Activated CD4-positive, alpha-beta T cell treated with anti-CD3 and anti-CD28 coated beads for 36 hours (primary cell): ENCODE measurements at regions of chr20 and their contacts with region 1.

Region 1: GRCh38 chr20:63627129-63627750 is 339 bp upstream of the GMEB2 start:
- DNase-seq: peak; percentile 97
- ATAC-seq: peak; percentile 77
- H3K4me3 Mint-ChIP-seq: peak overlapping the region; percentile 87
- H3K27ac Mint-ChIP-seq: peak overlapping the region; percentile 97
- H3K4me1 Mint-ChIP-seq: peaks cover 39% of the 10 kb centered on the region
- H3K27me3 Mint-ChIP-seq: no peaks in the 10 kb centered on the region

Region 2: GRCh38 chr20:62926239-62927104 is 700.8 kb before region 1 on chr20 and contains the start of gene DIDO1:
- CTCF ChIA-PET with region 1: no interaction called
- POLR2A ChIA-PET with region 1: no interaction called
- intact Hi-C with region 1: loop called (anchors 5 to 10 kb)
- DNase-seq: peak; percentile 94
- ATAC-seq: peak; percentile 78
- H3K4me3 Mint-ChIP-seq: peak within 1 kb of the TSS; percentile 94
- H3K27ac Mint-ChIP-seq: peak within 1 kb of the TSS; percentile 96
- H3K4me1 Mint-ChIP-seq: peaks cover 64% of the 10 kb centered on the region
- H3K27me3 Mint-ChIP-seq: no peaks in the 10 kb centered on the region
- total RNA-seq, gene DIDO1: 43.7 to 49.7 TPM

Region 3: DNA sequence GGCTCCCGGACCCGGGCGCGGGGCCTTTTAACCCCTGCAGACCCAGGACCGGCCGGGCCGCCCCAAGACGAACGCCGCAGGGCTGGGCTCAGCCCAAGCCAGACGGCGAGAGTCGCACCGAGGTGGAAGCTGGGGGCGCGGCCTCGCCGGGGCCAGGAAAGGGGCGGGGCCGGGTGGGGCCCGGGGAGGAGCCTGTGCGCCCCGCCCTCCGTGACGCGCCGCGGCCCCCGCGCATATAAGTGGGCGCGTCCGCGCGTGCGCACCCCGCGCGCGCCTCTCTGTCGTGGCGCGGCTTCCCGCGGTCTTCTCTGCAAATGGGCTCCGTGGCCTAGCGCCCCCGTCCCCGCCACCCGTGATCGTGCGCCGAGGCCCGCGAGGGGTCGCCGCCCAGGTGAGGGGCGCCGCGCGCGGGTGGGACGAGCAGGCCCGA is 106.7 kb before region 1 on chr20 and contains the start of gene PPDPF:
- CTCF ChIA-PET with region 1: no interaction called
- POLR2A ChIA-PET with region 1: no interaction called
- intact Hi-C with region 1: loop called in 1 of 2 experiments (anchors 1 kb)
- DNase-seq: peak; percentile 93
- ATAC-seq: peak; percentile 80
- H3K4me3 Mint-ChIP-seq: peak within 1 kb of the TSS; percentile 77
- H3K27ac Mint-ChIP-seq: peak within 1 kb of the TSS; percentile 78
- H3K4me1 Mint-ChIP-seq: peaks cover 10% of the 10 kb centered on the region
- H3K27me3 Mint-ChIP-seq: no peaks in the 10 kb centered on the region
- total RNA-seq, gene PPDPF: 119 to 133 TPM

Region 4: DNA sequence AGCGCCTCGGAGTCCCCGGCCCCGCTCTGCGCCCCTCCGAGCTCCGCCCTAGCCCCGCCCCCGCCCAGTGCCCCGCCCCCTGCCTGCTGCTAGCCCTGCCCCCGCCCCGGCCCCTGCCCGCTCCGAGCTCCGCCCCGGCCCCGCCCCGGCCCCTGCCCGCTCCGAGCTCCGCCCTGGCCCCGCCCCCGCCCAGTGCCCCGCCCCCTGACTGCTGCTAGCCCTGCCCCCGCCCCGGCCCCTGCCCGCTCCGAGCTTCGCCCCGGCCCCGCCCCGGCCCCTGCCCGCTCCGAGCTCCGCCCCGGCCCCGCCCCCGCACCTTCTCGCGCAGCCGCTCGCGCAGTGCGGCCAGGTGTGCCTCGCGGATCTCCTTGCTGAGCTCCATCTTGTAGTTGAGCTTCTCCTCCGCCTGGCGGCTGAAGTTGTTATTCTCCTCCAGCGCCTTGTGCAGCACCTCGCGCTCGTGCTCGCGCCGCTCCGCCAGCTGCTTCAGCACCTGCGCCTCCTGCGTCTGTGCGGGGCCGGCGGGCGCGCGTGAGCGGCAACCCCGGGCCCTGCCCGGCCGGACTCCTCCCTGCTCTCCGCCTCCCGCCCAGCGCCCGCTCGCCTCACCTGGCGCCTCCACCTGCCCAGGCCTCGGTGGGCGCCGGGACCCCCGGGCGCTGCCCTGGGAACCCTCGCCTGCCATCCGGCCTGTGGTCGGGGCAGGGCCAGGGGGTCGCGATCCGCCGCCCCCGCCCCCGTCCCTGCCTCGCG is 14.7 kb after region 1 on chr20:
- CTCF ChIA-PET with region 1: interaction called, 5 read pairs
- POLR2A ChIA-PET with region 1: interaction called, 12 read pairs
- intact Hi-C with region 1: loop called in 1 of 2 experiments (anchors 1 kb)
- DNase-seq: peak; percentile 98
- ATAC-seq: peak; percentile 73
- H3K4me3 Mint-ChIP-seq: peak overlapping the region; percentile 65
- H3K27ac Mint-ChIP-seq: no peak overlapping the region
- H3K4me1 Mint-ChIP-seq: peaks cover 31% of the 10 kb centered on the region
- H3K27me3 Mint-ChIP-seq: no peaks in the 10 kb centered on the region

Region 5: GRCh38 chr20:63864847-63865640 is 237.8 kb after region 1 on chr20 and contains the start of gene TPD52L2:
- CTCF ChIA-PET with region 1: no interaction called
- POLR2A ChIA-PET with region 1: no interaction called
- intact Hi-C with region 1: loop called in 1 of 2 experiments (anchors 1 kb)
- DNase-seq: peak; percentile 99
- ATAC-seq: peak; percentile 86
- H3K4me3 Mint-ChIP-seq: peak within 1 kb of the TSS; percentile 79
- H3K27ac Mint-ChIP-seq: peak within 1 kb of the TSS; percentile 92
- H3K4me1 Mint-ChIP-seq: peaks cover 24% of the 10 kb centered on the region
- H3K27me3 Mint-ChIP-seq: no peaks in the 10 kb centered on the region
- total RNA-seq, gene TPD52L2: 54.0 to 56.3 TPM

Region 6: GRCh38 chr20:63980806-63981728 is 353.8 kb after region 1 on chr20 and contains the start of gene PRPF6:
- CTCF ChIA-PET with region 1: no interaction called
- POLR2A ChIA-PET with region 1: interaction called, 3 read pairs
- intact Hi-C with region 1: loop called in 1 of 2 experiments (anchors 1 kb)
- DNase-seq: peak; percentile 98
- ATAC-seq: peak; percentile 47
- H3K4me3 Mint-ChIP-seq: peak within 1 kb of the TSS; percentile 97
- H3K27ac Mint-ChIP-seq: peak within 1 kb of the TSS; percentile 98
- H3K4me1 Mint-ChIP-seq: peaks cover 59% of the 10 kb centered on the region
- H3K27me3 Mint-ChIP-seq: no peaks in the 10 kb centered on the region
- total RNA-seq, gene PRPF6: 60.5 to 67.0 TPM